Posterior cingulate gyrus (tissue), 11 donors: ENCODE measurements at regions of chr10 and their contacts with region 1.

Region 1: GRCh38 chr10:70880077-70880534 is 8.3 kb downstream of the PCBD1 start:
- DNase-seq: peak; percentile 60 to 97 (median 84)

Region 2: DNA sequence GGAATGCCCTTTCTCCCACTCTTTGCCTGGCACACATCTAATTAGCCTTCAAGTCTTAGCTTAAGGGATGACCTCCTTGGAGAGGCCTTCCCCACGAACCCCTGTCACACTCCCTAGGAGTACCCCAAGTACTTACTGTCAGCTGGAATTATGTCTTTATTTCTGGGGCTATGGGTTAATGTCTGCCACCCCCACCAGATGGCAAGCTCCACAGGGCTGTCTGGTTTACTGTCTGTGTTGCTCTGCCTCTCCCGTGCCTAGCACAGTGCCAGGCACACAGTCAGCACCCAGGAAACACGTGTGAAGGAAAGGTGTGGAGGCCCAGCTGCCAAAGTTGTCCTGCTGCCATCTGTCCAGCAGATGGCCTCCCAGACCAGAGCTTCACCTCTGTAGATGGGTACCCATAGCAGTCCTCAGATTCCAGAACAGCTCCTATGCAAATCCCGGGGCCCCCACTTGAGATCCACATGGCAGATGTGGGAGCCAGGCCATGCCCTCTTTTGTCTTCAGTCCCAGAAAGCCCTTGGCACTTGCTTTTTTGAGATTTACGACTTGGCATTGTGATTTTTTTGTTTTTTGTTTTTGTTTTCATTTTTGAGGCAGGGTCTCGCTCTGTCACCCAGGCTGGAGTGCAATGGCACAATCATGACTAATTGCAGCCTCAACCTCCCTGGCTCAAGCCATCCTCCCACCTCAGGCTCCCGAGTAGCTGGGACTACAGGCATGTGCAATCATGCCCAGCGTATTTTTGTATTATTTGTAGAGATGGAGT is 418.7 kb before region 1 on chr10:
- intact Hi-C with region 1: loop called (anchors 5 kb)
- DNase-seq: peak in 8 of 10 donors; percentile 22 to 92 (median 58)

Region 3: DNA sequence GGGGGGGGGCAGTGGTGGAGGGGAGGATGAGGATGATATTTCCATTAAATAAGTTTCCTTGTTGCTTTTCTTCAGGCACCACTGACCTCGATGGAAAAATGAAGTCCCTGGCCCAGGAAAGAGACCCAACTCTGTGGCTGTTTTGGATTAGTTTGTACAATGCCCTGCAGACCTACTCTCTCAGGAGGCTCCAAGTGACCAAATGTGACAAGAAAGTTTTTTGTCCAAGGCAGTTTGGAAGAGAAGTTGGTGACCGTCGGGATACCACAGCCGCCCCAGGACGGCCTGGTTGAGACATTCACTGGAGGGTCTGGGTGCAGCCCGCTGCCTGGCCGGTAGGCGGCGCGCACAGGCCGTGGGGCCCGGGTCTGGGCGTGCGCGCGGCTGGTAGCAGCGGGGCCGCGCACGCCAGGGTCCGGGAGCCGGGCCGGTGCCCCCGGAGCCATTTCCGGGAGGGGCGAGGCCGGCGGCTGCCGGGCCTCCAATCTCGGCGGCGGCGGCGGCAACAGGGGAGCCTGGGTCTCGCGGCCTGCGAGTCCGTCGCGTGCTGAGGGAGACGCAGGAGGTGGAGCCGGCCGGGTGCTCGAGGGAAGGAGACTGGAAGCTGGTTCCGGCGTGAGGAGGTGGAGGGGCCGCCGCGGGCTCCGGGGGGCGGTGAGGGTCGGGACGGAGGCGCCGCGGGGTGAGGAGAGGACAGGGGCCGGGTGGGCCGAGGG is 64.4 kb before region 1 on chr10 and contains the start of gene SGPL1:
- intact Hi-C with region 1: loop called (anchors 1 kb)
- DNase-seq: peak; percentile 70 to 97 (median 79)

Region 4: GRCh38 chr10:71033396-71033980 is 153.4 kb after region 1 on chr10:
- intact Hi-C with region 1: no loop called
- DNase-seq: no peak